Posterior cingulate gyrus (tissue), 11 donors: ENCODE measurements at regions of chr4 and their contacts with region 1.

Region 1: DNA sequence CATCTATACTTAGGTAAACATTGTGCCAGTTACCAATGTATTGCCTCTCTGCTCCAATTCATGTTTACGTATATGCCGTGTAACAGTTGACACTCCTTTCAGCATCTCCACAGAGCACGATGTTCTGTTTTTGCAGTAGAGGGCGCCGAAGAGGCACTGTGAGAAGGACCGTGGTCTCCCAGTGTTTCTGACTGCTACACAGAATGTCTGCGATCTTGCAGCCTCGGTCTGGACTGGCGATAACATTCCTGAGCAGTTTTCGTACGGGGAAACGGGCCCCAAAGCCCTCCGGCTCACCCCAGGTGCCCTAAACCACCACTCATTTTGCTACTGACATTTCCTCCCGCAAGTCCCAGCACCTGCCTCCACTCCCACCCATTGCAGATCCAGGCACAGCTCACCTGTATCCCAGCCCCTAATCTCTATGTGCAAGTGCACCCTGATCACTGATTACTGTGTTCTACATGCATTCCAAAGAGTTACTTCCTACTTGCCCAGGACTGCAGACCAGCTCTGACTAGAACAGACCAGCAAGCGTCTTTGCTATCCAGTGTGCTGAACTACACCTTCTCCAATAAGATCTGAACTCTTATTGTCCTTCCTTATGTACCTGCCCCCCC is 12.4 kb upstream of the NFXL1 start:
- DNase-seq: peak in 9 of 10 donors; percentile 30 to 94 (median 59)

Region 2: GRCh38 chr4:48085821-48086607 is 159.3 kb after region 1 on chr4:
- intact Hi-C with region 1: loop called (anchors 5 kb)
- DNase-seq: no peak

Region 3: DNA sequence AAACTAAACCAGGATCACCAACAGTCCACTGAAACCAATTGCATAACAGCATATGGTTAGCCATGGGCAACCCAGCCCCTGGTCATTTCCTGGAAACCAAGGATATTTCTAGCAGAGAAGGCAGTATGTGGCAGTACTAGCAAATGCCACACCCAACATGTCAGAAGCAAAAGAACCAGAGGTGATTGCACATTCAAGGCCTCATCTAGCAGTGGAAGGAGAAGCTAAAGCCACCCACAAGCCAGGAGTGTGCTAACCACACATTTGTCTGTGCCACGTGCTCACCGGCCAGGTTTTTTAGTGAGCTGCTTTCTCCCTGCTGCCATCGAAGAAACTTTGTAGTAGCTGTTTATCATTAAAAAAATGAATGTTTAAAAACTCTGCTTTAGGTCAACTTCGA is 300.9 kb after region 1 on chr4:
- intact Hi-C with region 1: no loop called
- DNase-seq: no peak